ENCODE measurements at regions of chr12 and their contacts with region 1.

Region 1: DNA sequence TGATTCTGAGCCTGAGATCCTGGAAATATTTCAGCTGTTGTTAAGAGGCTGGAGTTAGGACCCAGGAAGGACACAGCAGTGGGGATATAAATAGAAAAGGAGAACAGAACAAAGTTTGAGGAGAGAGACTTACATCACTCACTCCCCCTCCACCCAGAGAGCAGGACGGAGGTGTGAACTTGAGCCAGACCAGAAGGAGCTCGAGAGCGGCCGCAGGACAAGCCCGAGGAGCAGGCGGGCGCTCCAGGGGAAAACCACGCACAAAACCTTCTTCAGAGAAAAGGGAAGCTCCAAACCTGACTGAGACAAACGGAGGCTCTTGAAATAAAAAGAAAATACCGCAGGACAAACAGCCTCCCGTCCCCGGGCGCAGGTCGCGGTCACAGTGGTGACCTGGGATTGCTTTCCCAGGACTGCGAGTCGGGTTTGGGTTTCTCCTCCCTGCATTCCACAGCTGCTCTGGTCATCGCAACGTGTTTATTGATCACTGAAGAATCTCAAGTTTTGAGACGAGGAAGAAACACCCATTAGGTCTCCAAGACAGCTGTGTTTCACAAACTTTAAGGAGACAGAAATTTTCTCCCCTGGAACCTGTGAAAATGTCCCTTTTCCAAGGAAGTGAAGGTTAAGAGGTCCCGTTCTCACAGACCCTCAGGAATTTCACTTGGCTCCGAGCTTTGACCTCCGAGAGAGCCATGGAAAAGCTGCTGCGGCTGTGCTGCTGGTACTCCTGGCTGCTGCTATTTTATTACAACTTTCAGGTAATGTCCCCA is at the start of gene ADGRD1:
- DNase-seq: peak; percentile 70 to 86 (median 74)
- ATAC-seq: peak; percentile 85 to 89
- H3K4me3 ChIP-seq: peak within 1 kb of the TSS; percentile 86
- H3K27ac ChIP-seq: peak within 1 kb of the TSS; percentile 86
- H3K4me1 ChIP-seq: peaks cover 2% of the 10 kb centered on the region
- H3K27me3 ChIP-seq: no peaks in the 10 kb centered on the region
- total RNA-seq, gene ADGRD1: 188 to 386 (median 239) TPM

Region 2: GRCh38 chr12:130650131-130650530 is 303.8 kb before region 1 on chr12:
- intact Hi-C with region 1: no loop called
- DNase-seq: no peak
- ATAC-seq: no peak
- H3K4me3 ChIP-seq: no peak overlapping the region
- H3K27ac ChIP-seq: no peak overlapping the region
- H3K4me1 ChIP-seq: no peaks in the 10 kb centered on the region
- H3K27me3 ChIP-seq: no peaks in the 10 kb centered on the region

Region 3: GRCh38 chr12:130977046-130977742 is 23.2 kb after region 1 on chr12:
- intact Hi-C with region 1: loop called in 1 of 4 experiments (anchors 1 kb)
- DNase-seq: peak in 1 of 3 donors; percentile 29
- ATAC-seq: no peak
- H3K4me3 ChIP-seq: no peak overlapping the region
- H3K27ac ChIP-seq: no peak overlapping the region
- H3K4me1 ChIP-seq: peaks cover 2% of the 10 kb centered on the region
- H3K27me3 ChIP-seq: no peaks in the 10 kb centered on the region

Measured in right cardiac atrium (tissue), 5 donors.